ENCODE measurements at regions of chr7 and their contacts with region 1.

Region 1: DNA sequence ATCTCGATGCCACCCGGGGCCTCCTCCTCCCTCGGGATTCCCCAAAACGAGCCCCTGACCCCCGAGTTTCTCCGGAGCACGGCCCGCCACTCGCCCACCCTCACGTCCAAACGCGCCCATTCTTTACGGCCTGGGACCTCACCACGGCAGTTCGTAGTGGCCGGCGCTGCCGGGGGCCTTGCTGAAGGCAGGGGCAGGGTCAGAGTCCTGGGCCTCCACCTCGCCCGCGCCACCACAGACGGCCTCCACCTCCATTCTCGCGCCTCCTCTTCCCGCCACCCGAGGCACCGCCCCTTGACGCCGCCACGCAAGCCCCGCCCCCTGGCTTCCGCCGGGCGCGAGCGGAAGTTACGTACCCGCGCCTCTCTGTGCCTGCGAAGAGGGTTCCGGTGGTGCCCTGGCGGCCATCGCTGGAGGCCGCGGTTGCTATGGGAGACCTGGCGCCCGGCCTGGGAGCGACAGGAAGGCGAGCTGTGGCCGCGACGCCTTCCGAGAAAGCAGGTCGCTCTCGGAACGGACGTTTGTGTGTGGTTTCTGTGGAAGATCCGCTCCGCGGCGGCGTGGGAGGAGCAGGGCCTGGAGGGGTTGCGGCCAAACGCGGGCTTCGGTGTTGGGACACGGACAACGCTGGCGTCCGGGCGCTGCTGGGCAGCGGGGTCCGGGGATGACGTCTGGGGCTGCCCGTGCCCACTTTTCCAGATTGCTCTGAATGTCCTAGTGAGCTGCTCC is at the start of gene RFC2:
- DNase-seq: peak; percentile 98
- H3K4me3 ChIP-seq: peak within 1 kb of the TSS; percentile 75 to 89 (median 78)
- H3K27ac ChIP-seq: peak within 1 kb of the TSS; percentile 79
- H3K4me1 ChIP-seq: peaks cover 22% of the 10 kb centered on the region
- H3K27me3 ChIP-seq: no peaks in the 10 kb centered on the region
- CTCF ChIP-seq: peak in 1 of 2 donors; percentile 28
- POLR2A ChIP-seq: peak; percentile 38
- total RNA-seq, gene RFC2: 40.0 and 44.3 TPM in 2 replicates

Region 2: GRCh38 chr7:74272305-74273038 is 18.2 kb after region 1 on chr7:
- CTCF ChIA-PET with region 1: interaction called, 5 read pairs
- POLR2A ChIA-PET with region 1: no interaction called
- dilution Hi-C with region 1: no loop called
- intact Hi-C with region 1: loop called (anchors 1 kb)
- DNase-seq: peak; percentile 90
- H3K4me3 ChIP-seq: no peak overlapping the region
- H3K27ac ChIP-seq: peak overlapping the region; percentile 88
- H3K4me1 ChIP-seq: peaks cover 16% of the 10 kb centered on the region
- H3K27me3 ChIP-seq: no peaks in the 10 kb centered on the region
- CTCF ChIP-seq: no peak
- POLR2A ChIP-seq: no peak

Region 3: GRCh38 chr7:74289018-74289658 is 34.8 kb after region 1 on chr7 and contains the start of gene CLIP2:
- CTCF ChIA-PET with region 1: interaction called, 4 read pairs
- POLR2A ChIA-PET with region 1: no interaction called
- dilution Hi-C with region 1: no loop called
- intact Hi-C with region 1: loop called (anchors 1 kb)
- DNase-seq: peak; percentile 67
- H3K4me3 ChIP-seq: peak within 1 kb of the TSS; percentile 75 to 90 (median 85)
- H3K27ac ChIP-seq: peak within 1 kb of the TSS; percentile 29
- H3K4me1 ChIP-seq: peaks cover 11% of the 10 kb centered on the region
- H3K27me3 ChIP-seq: no peaks in the 10 kb centered on the region
- CTCF ChIP-seq: no peak
- POLR2A ChIP-seq: peak; percentile 65
- total RNA-seq, gene CLIP2: 37.1 and 38.0 TPM in 2 replicates

Region 4: GRCh38 chr7:74306730-74307469 is 52.6 kb after region 1 on chr7:
- CTCF ChIA-PET with region 1: no interaction called
- POLR2A ChIA-PET with region 1: no interaction called
- dilution Hi-C with region 1: no loop called
- intact Hi-C with region 1: loop called (anchors 5 kb)
- DNase-seq: peak; percentile 69
- H3K4me3 ChIP-seq: no peak overlapping the region
- H3K27ac ChIP-seq: no peak overlapping the region
- H3K4me1 ChIP-seq: peaks cover 12% of the 10 kb centered on the region
- H3K27me3 ChIP-seq: no peaks in the 10 kb centered on the region
- CTCF ChIP-seq: no peak
- POLR2A ChIP-seq: no peak

Region 5: DNA sequence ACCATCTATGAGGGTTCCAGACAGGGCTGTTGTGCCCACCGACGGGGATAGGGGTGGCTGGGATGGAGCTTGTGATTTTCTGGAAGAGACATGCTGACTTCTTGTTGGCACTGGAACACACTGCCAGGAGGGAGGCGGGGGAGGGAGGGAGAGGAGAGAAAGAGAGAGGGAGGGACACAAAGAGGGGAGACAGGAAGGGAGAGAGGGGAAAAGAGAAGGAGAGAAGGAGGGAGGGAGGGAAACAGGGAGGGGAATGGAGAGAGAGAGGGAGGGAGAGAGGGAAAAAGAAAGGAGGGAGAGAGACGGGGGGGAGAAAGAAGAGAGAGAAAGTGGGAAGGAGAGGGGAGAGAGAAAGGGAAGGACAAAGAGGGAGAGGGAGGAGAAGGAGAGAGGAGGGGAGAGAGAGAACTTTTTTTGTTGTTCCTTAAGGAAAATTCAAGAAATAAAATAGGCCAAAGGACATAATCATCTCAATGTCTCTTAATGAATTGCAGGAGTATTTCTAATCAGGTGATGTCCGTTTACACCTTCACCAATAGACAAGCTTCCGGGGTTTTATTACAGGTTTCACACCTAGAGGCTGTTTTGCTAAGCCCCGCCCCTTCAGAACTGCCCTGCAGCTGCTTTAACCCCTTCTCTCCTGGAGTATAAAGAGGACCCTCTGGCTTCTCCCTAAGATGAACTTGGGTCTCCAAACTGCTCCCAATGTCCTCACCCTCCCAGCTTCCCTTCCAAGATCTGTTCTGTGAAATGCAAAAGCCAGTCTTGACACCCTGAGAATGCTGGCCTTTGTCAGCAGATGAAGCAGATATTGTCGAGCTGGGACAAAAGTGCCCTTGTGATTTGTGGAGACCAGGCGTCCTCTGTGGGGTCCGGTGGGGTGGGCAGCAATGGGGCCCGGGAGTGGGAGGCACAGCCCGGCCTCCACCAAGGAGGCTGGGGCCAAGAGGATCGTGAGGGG is 117.4 kb after region 1 on chr7:
- CTCF ChIA-PET with region 1: no interaction called
- POLR2A ChIA-PET with region 1: interaction called, 11 read pairs
- dilution Hi-C with region 1: no loop called
- intact Hi-C with region 1: no loop called
- DNase-seq: no peak
- H3K4me3 ChIP-seq: no peak overlapping the region
- H3K27ac ChIP-seq: no peak overlapping the region
- H3K4me1 ChIP-seq: no peaks in the 10 kb centered on the region
- H3K27me3 ChIP-seq: no peaks in the 10 kb centered on the region
- CTCF ChIP-seq: no peak
- POLR2A ChIP-seq: no peak

Measured in endothelial cell of umbilical vein (primary cell).